ENCODE measurements at regions of chr1 and their contacts with region 1.

Region 1: DNA sequence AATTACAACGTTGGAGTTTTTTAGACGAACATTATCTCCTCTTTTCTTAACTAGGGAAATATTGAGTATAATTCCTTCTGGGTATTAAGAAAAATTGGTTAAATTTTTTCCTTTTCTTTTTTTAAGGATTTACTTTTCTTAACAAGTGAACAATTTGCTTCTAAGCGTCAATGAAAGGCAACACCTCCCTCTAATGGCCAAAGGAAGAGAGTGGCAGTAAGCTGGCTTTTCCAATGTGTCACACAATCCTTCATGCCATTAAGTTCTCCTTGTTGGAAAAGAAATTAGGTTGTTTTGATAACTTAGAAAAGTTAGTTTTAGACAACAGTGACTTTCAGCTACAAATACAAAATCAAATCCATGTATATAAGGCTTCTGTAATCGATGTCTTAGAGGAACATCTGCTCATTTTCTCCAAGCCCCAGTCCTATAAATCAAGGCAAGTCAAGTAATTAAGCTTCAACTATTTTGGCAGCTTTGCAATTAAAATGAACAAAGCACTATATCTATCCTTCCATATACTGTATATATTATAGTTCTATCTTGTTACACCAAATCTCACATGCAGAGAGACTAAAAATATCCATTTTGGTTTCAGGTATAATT is 62.8 kb downstream of the EDEM3 start:
- DNase-seq: peak in 1 of 4 experiments; percentile 44
- ATAC-seq: peak; percentile 74
- H3K4me3 ChIP-seq: no peak overlapping the region
- H3K27ac ChIP-seq: no peak overlapping the region
- H3K4me1 ChIP-seq: no peaks in the 10 kb centered on the region
- H3K27me3 ChIP-seq: no peaks in the 10 kb centered on the region
- CTCF ChIP-seq: peak; percentile 52 to 68 (median 67); a peak in 5 of 6 replicates
- EP300 ChIP-seq: no peak
- POLR2A ChIP-seq: no peak
- RAD21 ChIP-seq: peak; percentile 44 to 60

Region 2: GRCh38 chr1:184610876-184611595 is 80.8 kb before region 1 on chr1:
- CTCF ChIA-PET with region 1: no interaction called
- POLR2A ChIA-PET with region 1: no interaction called
- in situ Hi-C with region 1: no loop called
- intact Hi-C with region 1: no loop called
- DNase-seq: no peak
- ATAC-seq: peak; percentile 67
- H3K4me3 ChIP-seq: no peak overlapping the region
- H3K27ac ChIP-seq: no peak overlapping the region
- H3K4me1 ChIP-seq: no peaks in the 10 kb centered on the region; a peak in 1 of 5 replicates
- H3K27me3 ChIP-seq: no peaks in the 10 kb centered on the region
- CTCF ChIP-seq: no peak
- EP300 ChIP-seq: no peak
- POLR2A ChIP-seq: no peak
- RAD21 ChIP-seq: no peak

Region 3: GRCh38 chr1:184982002-184982954 is 290.5 kb after region 1 on chr1:
- CTCF ChIA-PET with region 1: no interaction called
- POLR2A ChIA-PET with region 1: no interaction called
- in situ Hi-C with region 1: no loop called
- intact Hi-C with region 1: loop called (anchors 5 kb)
- DNase-seq: peak; percentile 63 to 88 (median 74)
- ATAC-seq: peak; percentile 100
- H3K4me3 ChIP-seq: no peak overlapping the region
- H3K27ac ChIP-seq: no peak overlapping the region
- H3K4me1 ChIP-seq: peaks cover 0 to 2% of the 10 kb centered on the region in 2 experiments; a peak in 2 of 5 replicates
- H3K27me3 ChIP-seq: peaks cover 0 to 2% of the 10 kb centered on the region in 2 experiments; a peak in 1 of 5 replicates
- CTCF ChIP-seq: peak; percentile 91 to 98 (median 98)
- EP300 ChIP-seq: peak; percentile 60; the same call in 1 of the 2 replicates
- POLR2A ChIP-seq: no peak
- RAD21 ChIP-seq: peak; percentile 98 to 99